Activated B cell treated with CpG ODN at 0.5 μM for 24 hours (primary cell): ENCODE measurements at regions of chr18 and their contacts with region 1.

Region 1: GRCh38 chr18:26090130-26091046 is at the start of gene SS18:
- DNase-seq: peak; percentile 90
- ATAC-seq: peak; percentile 81
- H3K4me3 Mint-ChIP-seq: peak within 1 kb of the TSS; percentile 95
- H3K27ac Mint-ChIP-seq: peak within 1 kb of the TSS; percentile 97
- H3K4me1 Mint-ChIP-seq: peaks cover 46% of the 10 kb centered on the region
- H3K27me3 Mint-ChIP-seq: no peaks in the 10 kb centered on the region
- CTCF ChIP-seq: no peak
- total RNA-seq, gene SS18: 86.4 and 99.7 TPM in 2 replicates

Region 2: GRCh38 chr18:26039203-26039602 is 51.2 kb before region 1 on chr18:
- CTCF ChIA-PET with region 1: interaction called, 6 read pairs
- POLR2A ChIA-PET with region 1: interaction called, 11 read pairs
- intact Hi-C with region 1: no loop called
- DNase-seq: no peak
- ATAC-seq: no peak
- H3K4me3 Mint-ChIP-seq: no peak overlapping the region
- H3K27ac Mint-ChIP-seq: no peak overlapping the region
- H3K4me1 Mint-ChIP-seq: no peaks in the 10 kb centered on the region
- H3K27me3 Mint-ChIP-seq: no peaks in the 10 kb centered on the region
- CTCF ChIP-seq: no peak

Region 3: GRCh38 chr18:26127786-26128185 is 37.4 kb after region 1 on chr18:
- CTCF ChIA-PET with region 1: no interaction called
- POLR2A ChIA-PET with region 1: no interaction called
- intact Hi-C with region 1: loop called (anchors 2 kb)
- DNase-seq: no peak
- ATAC-seq: no peak
- H3K4me3 Mint-ChIP-seq: no peak overlapping the region
- H3K27ac Mint-ChIP-seq: no peak overlapping the region
- H3K4me1 Mint-ChIP-seq: no peaks in the 10 kb centered on the region
- H3K27me3 Mint-ChIP-seq: no peaks in the 10 kb centered on the region
- CTCF ChIP-seq: no peak

Region 4: DNA sequence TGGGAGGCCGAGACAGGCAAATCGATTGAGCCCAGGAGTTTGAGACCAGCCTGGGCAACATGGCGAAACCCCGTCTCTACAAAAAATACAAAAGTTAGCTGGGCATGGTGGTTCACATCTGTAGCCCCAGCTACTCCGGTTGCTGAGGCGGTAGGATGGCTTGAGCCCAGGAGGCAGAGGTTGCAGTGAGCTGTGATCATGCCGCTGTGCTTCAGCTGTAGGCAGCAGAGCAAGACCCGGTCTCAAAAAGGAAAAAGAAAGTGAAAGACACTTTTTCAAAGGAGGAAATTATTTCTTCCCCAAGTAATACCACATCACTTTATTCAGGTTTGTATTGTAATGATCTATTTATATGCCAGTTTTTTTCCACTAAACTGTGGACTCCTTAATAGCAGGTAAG is 100.1 kb after region 1 on chr18:
- CTCF ChIA-PET with region 1: no interaction called
- POLR2A ChIA-PET with region 1: interaction called, 6 read pairs
- intact Hi-C with region 1: loop called (anchors 1 kb)
- DNase-seq: peak; percentile 37
- ATAC-seq: peak; percentile 95
- H3K4me3 Mint-ChIP-seq: peak overlapping the region; percentile 75
- H3K27ac Mint-ChIP-seq: peak overlapping the region; percentile 85
- H3K4me1 Mint-ChIP-seq: peaks cover 32% of the 10 kb centered on the region
- H3K27me3 Mint-ChIP-seq: no peaks in the 10 kb centered on the region
- CTCF ChIP-seq: no peak

Region 5: DNA sequence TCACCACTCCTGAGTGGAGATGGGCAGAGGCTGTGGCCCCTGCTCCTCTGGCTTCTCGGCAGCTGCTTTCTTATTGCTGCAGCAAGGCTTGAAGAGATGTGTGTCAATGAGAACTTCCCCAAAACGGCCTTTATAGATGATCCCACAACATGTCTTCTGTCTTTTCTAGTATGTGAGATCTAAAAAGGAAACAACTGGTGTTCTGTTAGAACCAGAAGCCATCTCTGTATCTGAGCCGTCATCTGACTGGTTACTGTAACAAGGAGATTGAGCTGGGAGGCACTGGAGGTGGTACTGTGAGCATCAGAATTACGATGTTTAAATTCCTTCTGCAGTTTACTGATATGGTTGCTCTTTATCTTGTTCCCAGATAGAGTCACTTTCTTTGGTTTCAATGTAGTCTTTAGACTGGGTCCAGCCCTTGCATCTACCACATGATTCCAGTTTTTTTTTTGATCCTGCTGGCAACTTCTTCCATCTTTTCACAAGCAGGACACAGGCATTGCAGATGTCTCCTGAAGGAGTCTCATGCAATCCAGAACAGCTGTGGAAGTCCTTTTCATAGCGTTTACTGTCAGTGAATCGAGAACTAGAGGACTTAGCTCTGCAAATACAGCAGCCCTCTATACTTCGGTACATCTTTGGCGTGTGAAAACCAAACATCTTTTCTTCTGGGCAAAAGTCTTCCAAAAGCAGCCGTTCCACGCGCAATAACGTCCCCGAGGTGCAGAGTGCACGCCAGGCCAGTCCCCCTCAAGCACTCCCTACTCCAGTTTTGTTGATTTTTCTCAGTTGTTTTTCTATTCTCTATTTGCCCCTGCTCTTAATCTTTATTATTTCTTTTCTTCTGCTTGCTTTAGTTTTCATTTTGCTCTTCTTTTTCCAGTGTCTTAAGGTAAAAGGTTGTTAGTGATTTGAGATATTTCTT is 165.6 kb after region 1 on chr18:
- CTCF ChIA-PET with region 1: interaction called, 5 read pairs
- POLR2A ChIA-PET with region 1: interaction called, 7 read pairs
- intact Hi-C with region 1: loop called (anchors 1 kb)
- DNase-seq: no peak
- ATAC-seq: peak; percentile 60
- H3K4me3 Mint-ChIP-seq: peak overlapping the region; percentile 51
- H3K27ac Mint-ChIP-seq: peak overlapping the region; percentile 72
- H3K4me1 Mint-ChIP-seq: peaks cover 53% of the 10 kb centered on the region
- H3K27me3 Mint-ChIP-seq: no peaks in the 10 kb centered on the region
- CTCF ChIP-seq: no peak

Region 6: GRCh38 chr18:26963292-26963691 is 872.9 kb after region 1 on chr18:
- CTCF ChIA-PET with region 1: no interaction called
- POLR2A ChIA-PET with region 1: no interaction called
- intact Hi-C with region 1: no loop called
- DNase-seq: no peak
- ATAC-seq: no peak
- H3K4me3 Mint-ChIP-seq: no peak overlapping the region
- H3K27ac Mint-ChIP-seq: no peak overlapping the region
- H3K4me1 Mint-ChIP-seq: no peaks in the 10 kb centered on the region
- H3K27me3 Mint-ChIP-seq: no peaks in the 10 kb centered on the region
- CTCF ChIP-seq: no peak